ENCODE measurements at regions of chr2 and their contacts with region 1.

Region 1: DNA sequence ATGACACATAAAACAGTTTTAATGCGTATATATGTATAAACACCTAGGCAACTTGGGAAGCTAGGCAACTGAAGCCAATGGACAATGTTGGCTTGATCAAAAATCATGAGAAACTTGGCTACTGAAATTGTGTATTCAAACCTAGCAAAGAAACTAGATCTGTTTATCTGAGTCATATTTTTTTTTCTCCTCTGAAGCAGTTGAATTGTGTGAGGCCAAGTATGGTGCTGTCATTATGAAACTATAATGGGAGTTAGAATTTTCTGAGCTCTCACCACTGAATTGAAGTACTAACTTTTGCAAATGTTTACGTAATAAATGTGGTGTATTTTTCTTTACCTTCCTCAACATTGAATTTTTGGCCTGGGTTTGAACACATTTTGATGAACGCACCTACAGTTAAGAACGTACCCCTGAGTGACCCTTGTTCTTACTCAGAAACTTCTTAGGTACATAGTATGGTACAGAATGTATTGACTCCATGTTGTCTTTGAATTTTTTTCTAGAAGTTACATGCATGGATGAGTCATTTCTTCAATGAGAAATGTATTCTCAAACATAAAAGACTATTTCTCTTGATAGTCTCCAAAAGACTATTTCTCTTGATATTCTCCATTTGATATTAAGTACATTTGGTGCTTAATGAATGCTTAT is 23.8 kb downstream of the CD28 start:
- DNase-seq: no peak

Region 2: DNA sequence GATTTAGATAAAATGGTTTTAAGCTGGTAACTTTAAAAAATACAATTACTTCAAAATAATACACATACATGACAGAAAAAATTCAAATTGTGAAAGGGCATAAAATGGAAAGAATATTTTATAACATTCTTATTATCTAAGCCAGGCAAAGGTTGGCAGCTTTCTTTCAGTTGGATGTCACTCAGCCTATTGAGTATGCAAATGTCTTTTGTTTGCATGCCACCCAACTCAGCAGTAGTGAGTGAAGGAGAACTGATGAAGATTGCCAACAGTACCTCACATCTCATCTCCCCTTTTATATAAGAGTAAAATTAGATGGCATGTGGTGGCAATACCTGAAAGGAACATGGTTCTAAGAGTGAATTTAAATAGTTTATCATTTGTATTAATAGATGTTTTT is 1329.3 kb before region 1 on chr2:
- intact Hi-C with region 1: no loop called
- DNase-seq: no peak

Region 3: GRCh38 chr2:203718087-203718486 is 12.1 kb before region 1 on chr2:
- intact Hi-C with region 1: no loop called
- DNase-seq: no peak

Region 4: GRCh38 chr2:205347899-205348298 is 1617.7 kb after region 1 on chr2:
- intact Hi-C with region 1: loop called in 1 of 2 experiments (anchors 10 kb)
- DNase-seq: no peak